ENCODE measurements at regions of chr14 and their contacts with region 1.

Region 1: DNA sequence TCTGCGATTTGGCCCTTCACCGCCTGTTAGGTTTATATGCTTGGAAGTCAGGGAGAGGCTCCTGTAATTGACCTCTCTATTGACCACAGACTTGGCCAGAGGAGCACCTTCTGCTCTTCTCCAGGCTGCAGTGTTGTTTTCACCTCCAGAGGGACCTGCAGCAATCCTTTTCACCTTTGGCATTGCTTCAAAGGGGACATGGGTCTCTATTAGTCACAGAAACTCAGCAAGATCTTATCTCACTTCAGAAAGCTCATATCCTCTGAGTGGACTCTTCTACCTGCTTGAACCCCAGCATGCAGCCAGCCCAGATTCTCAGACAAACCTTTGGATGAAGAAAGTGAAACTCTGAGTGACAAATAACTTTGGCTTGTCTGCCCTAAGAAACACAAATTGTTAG is 339.3 kb downstream of the NRXN3 start:
- DNase-seq: no peak
- H3K4me3 Mint-ChIP-seq: no peak overlapping the region
- H3K27ac Mint-ChIP-seq: no peak overlapping the region
- H3K4me1 Mint-ChIP-seq: no peaks in the 10 kb centered on the region
- H3K27me3 Mint-ChIP-seq: no peaks in the 10 kb centered on the region

Region 2: DNA sequence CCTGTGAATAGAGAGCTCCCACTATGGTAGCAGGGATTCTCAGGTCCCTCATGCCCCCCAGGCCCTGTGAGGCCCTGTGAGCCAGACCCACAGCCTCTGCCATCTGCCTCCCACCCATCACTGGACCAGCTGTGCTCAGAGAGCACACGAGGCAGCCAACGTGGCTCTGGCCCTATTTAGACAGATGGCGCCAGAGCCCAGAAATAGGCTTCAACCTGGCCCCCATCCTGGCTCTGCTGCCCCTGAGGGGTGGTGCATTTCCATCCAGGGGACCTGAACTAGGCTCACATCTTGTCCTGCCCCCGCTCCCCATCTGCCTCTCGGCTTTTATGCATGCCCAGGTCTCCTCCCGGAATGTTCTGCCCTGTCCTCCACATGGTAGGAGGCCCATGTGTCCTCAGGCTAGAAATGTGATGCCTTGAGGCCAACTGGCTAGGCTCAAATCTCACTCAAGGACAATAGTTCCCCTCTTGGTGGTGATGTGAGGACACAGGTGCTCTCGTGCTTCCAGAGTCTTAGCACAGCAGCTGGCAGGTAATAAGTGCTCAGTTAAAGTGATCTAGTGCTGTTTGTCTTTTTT is 1309.0 kb before region 1 on chr14:
- intact Hi-C with region 1: no loop called
- DNase-seq: no peak
- H3K4me3 Mint-ChIP-seq: no peak overlapping the region
- H3K27ac Mint-ChIP-seq: no peak overlapping the region
- H3K4me1 Mint-ChIP-seq: no peaks in the 10 kb centered on the region
- H3K27me3 Mint-ChIP-seq: peaks cover 2% of the 10 kb centered on the region

Region 3: GRCh38 chr14:78178971-78179370 is 330.5 kb before region 1 on chr14:
- intact Hi-C with region 1: loop called (anchors 5 kb)
- DNase-seq: no peak
- H3K4me3 Mint-ChIP-seq: no peak overlapping the region
- H3K27ac Mint-ChIP-seq: no peak overlapping the region
- H3K4me1 Mint-ChIP-seq: no peaks in the 10 kb centered on the region
- H3K27me3 Mint-ChIP-seq: peaks cover 1% of the 10 kb centered on the region